Heart left ventricle (tissue), 16 donors: ENCODE measurements at regions of chrX and their contacts with region 1.

Region 1: GRCh38 chrX:137667775-137668174 is 101.8 kb downstream of the ZIC3 start:
- DNase-seq: no peak
- ATAC-seq: no peak
- H3K4me3 ChIP-seq: no peak overlapping the region
- H3K27ac ChIP-seq: no peak overlapping the region
- H3K4me1 ChIP-seq: no peaks in the 10 kb centered on the region
- H3K27me3 ChIP-seq: no peaks in the 10 kb centered on the region
- CTCF ChIP-seq: no peak
- POLR2A ChIP-seq: no peak

Region 2: GRCh38 chrX:137654472-137654871 is 13.3 kb before region 1 on chrX:
- intact Hi-C with region 1: loop called in 1 of 10 experiments (anchors 1 kb)
- DNase-seq: no peak
- ATAC-seq: no peak
- H3K4me3 ChIP-seq: no peak overlapping the region
- H3K27ac ChIP-seq: no peak overlapping the region
- H3K4me1 ChIP-seq: no peaks in the 10 kb centered on the region
- H3K27me3 ChIP-seq: peaks cover 0 to 4% (median 0%) of the 10 kb centered on the region in 9 donors
- CTCF ChIP-seq: no peak
- POLR2A ChIP-seq: no peak